Esophagus muscularis mucosa (tissue), 4 donors: ENCODE measurements at regions of chr6 and their contacts with region 1.

Region 1: DNA sequence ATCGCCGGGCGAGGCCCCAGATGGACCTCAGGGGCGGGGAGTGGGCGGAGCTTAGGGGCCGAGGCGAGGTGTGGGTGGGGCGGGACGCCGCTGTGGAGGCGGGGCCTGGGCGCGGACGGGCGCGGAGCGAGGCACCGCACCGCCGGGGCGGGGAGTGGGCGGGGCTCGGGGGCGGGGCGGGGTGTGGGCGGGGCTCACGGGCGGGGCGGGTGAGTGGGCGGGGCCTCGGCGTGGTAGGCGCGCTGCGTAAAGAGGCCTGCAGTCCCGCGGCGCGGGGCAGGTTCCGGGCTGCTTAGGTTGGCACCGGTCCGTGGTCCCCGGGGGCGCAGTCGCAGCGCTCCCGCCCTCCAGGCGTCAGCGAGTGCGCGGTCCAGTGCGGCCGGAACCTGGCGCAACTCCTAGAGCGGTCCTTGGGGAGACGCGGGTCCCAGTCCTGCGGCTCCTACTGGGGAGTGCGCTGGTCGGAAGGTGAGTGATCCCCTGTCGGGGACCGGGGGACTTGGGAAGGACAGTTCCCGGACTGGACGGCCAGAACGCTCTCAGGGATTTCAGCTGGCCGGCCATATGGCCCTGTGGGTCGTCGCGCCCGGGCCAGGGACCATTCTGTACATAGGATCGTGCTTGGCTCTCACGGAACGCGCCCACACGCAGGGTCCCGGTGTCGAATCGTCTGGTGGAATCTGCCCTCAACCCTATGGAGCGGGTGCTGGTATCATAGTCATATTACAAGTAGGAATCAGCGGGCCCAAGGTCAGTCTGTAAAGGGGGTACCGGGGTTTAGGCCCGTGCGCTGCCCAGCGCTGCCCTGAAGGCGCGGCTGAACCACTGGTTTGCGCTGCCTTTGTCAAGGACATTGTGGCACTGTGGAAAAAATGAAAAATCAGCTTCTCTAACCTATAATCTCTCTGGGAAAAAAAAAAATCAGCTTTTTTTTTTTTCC is at the start of gene NQO2:
- DNase-seq: peak; percentile 98
- H3K4me3 ChIP-seq: peak within 1 kb of the TSS; percentile 81 to 95 (median 92)
- H3K27ac ChIP-seq: peak within 1 kb of the TSS; percentile 86 to 91 (median 90)
- H3K4me1 ChIP-seq: peaks cover 25 to 42% (median 33%) of the 10 kb centered on the region in 4 donors
- H3K27me3 ChIP-seq: no peaks in the 10 kb centered on the region
- CTCF ChIP-seq: no peak
- EP300 ChIP-seq: no peak
- POLR2A ChIP-seq: peak; percentile 91
- total RNA-seq, gene NQO2: 22.9 to 31.3 (median 27.2) TPM

Region 2: GRCh38 chr6:3058957-3059356 is 59.1 kb after region 1 on chr6:
- intact Hi-C with region 1: loop called (anchors 2 kb)
- DNase-seq: no peak
- H3K4me3 ChIP-seq: no peak overlapping the region
- H3K27ac ChIP-seq: no peak overlapping the region
- H3K4me1 ChIP-seq: peaks cover 11 to 18% (median 18%) of the 10 kb centered on the region in 4 donors
- H3K27me3 ChIP-seq: no peaks in the 10 kb centered on the region
- CTCF ChIP-seq: no peak
- EP300 ChIP-seq: no peak
- POLR2A ChIP-seq: no peak

Region 3: GRCh38 chr6:3118353-3119039 is 118.6 kb after region 1 on chr6 and contains the start of gene BPHL:
- intact Hi-C with region 1: loop called (anchors 1 kb)
- DNase-seq: peak; percentile 99
- H3K4me3 ChIP-seq: peak within 1 kb of the TSS; percentile 78 to 97 (median 92)
- H3K27ac ChIP-seq: peak within 1 kb of the TSS; percentile 87 to 94 (median 88)
- H3K4me1 ChIP-seq: peaks cover 6 to 16% (median 16%) of the 10 kb centered on the region in 4 donors
- H3K27me3 ChIP-seq: no peaks in the 10 kb centered on the region
- CTCF ChIP-seq: no peak
- EP300 ChIP-seq: no peak
- POLR2A ChIP-seq: no peak
- total RNA-seq, gene BPHL: 6.3 to 8.3 (median 7.3) TPM